ENCODE measurements at regions of chr6 and their contacts with region 1.

Region 1: GRCh38 chr6:44338228-44339122 is 4.0 kb upstream of the SPATS1 start:
- DNase-seq: peak; percentile 76
- H3K4me3 Mint-ChIP-seq: no peak overlapping the region
- H3K27ac Mint-ChIP-seq: no peak overlapping the region
- H3K4me1 Mint-ChIP-seq: no peaks in the 10 kb centered on the region
- H3K27me3 Mint-ChIP-seq: peaks cover 30% of the 10 kb centered on the region

Region 2: DNA sequence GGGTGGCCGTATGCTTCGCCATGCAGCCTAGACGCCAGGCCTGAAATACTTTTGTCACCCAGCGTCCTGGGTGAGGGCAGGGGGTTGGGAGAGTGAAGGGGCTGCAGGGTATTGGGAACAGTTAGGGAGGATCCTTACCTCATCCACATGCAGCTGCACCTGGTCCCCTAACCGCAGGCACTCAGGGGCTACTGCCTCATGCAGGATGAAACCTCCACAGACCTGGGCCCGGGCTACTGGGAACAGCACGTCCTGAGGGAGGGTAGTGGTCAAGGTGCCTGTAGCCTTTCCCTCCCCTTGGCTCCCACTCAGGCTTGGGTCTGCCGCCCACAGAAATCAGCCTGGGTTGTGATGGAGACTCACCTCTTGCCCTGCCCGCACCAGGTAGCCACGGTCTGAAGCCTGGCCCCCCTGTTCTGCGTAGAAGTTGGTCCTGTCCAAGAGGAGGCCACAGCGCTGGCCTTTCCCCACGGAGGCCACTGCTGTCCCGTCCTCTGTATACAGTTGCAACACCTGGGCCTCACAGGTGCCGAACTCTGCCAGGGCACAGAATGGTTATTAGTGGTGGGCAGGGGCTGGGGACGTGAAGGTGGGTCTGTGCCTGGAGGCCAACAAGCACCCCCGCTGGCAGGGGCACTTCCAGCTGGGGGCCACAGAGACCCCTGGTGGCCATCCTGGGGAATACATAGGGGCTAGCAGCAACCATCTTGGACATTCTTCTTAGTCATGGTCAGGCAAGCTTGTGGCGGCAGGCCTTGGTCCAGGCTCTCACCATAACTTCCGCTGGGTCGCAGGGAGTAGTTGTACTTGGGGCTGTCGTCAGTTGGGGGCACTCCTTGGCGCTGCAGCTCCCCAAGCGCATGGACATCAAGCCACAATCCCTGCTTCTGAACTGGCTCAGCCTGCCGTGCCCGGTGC is 33.9 kb before region 1 on chr6:
- CTCF ChIA-PET with region 1: interaction called, 18 read pairs
- POLR2A ChIA-PET with region 1: no interaction called
- DNase-seq: peak; percentile 34
- H3K4me3 Mint-ChIP-seq: no peak overlapping the region
- H3K27ac Mint-ChIP-seq: no peak overlapping the region
- H3K4me1 Mint-ChIP-seq: peaks cover 2% of the 10 kb centered on the region
- H3K27me3 Mint-ChIP-seq: no peaks in the 10 kb centered on the region